Naive thymus-derived CD8-positive, alpha-beta T cell (primary cell): ENCODE measurements at regions of chr14 and their contacts with region 1.

Region 1: DNA sequence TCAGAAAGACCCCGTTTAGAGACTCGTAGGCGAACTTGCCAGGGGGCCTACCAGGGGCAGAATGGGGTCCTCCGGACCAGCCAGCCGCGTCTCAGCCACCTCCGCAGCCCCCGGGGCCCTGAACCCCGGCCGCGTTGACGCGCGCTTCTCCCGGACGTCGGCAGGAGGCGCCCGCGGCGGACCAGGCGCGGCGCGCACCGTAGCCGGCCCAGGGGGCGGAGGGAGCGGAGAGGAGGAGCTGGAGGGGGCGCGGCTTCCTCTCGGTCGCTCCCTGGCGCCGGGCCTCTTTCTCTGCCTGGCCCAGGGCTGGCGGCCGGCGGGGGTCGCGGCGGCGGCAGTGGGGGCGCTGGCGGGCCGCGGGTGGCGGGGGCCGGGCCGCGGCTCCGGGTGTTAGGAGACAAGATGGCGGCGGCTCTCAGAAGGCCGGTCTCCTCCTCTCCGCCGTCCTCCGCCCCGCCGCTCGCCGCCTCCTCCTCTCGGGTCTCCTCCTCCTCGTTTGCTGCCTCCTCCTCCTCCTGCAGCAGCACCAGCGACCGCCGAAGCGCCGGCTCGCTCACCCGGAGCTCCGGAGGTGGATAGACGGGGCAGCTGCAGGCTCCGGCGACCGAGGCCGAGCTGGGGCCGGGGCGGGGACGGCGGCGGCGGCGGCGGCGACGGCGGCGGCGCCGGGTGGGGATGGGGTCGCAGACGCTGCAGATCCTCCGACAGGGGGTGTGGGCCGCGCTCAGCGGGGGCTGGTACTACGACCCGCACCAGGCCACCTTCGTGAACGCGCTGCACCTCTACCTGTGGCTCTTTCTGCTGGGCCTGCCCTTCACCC is at the start of gene PCNX1:
- DNase-seq: peak; percentile 86 to 96 (median 90)
- ATAC-seq: peak; percentile 80
- H3K4me3 Mint-ChIP-seq: peak within 1 kb of the TSS; percentile 79 to 95 (median 92)
- H3K27ac Mint-ChIP-seq: peak within 1 kb of the TSS; percentile 96 to 99 (median 98)
- H3K4me1 Mint-ChIP-seq: peaks cover 18 to 62% (median 54%) of the 10 kb centered on the region in 4 donors
- H3K27me3 Mint-ChIP-seq: no peaks in the 10 kb centered on the region
- polyA plus RNA-seq, gene PCNX1: 5.5 to 8.3 (median 7.9) TPM

Region 2: DNA sequence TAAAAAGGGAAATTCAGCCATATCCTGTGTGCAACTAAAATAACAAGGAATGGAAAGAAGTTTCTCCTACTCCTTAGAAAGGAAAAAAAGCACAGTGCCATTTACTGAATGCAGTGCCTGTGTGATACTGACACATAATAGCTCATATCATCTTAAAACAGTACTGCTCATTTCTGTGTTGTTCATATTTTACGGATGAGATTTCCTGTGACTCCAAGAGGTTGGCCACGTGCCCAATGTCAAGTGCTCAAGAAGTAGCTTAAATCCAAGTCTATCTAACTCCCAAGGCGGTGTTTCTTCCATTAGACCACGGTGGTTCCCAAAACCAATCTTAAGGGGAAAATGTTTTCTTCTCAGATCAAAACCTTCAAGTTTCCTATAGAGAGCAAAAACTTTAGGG is 118.0 kb before region 1 on chr14:
- POLR2A ChIA-PET with region 1: no interaction called
- DNase-seq: no peak
- ATAC-seq: no peak
- H3K4me3 Mint-ChIP-seq: no peak overlapping the region
- H3K27ac Mint-ChIP-seq: no peak overlapping the region
- H3K4me1 Mint-ChIP-seq: peaks cover 0 to 11% (median 5%) of the 10 kb centered on the region in 4 donors
- H3K27me3 Mint-ChIP-seq: no peaks in the 10 kb centered on the region

Region 3: GRCh38 chr14:70919774-70920173 is 12.4 kb after region 1 on chr14:
- POLR2A ChIA-PET with region 1: interaction called, 29 read pairs
- DNase-seq: no peak
- ATAC-seq: peak; percentile 26 to 46
- H3K4me3 Mint-ChIP-seq: peak overlapping the region in 9 of 10 donors; percentile 45 to 80 (median 59)
- H3K27ac Mint-ChIP-seq: peak overlapping the region; percentile 50 to 90 (median 80)
- H3K4me1 Mint-ChIP-seq: peaks cover 33 to 95% (median 81%) of the 10 kb centered on the region in 4 donors
- H3K27me3 Mint-ChIP-seq: no peaks in the 10 kb centered on the region

Region 4: DNA sequence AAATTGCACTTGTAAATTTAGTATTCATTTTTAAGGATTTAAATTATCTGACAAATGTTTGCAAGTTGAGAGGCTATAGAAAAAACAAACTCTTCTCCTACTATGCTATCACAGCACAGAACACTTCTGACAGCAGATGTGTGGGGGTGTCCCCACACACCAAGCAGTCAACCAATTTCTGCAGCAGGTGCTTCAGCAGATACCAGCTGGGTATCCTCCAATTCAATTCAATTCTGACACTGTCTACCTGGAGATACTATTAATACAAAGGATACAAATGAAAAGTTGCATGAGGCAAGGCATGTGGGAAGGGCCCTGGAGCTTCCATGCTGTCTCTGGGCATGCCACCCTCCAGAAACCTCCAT is 34.9 kb after region 1 on chr14:
- POLR2A ChIA-PET with region 1: interaction called, 21 read pairs
- DNase-seq: no peak
- ATAC-seq: peak in 1 of 2 donors; percentile 17
- H3K4me3 Mint-ChIP-seq: peak overlapping the region in 8 of 10 donors; percentile 22 to 75 (median 62)
- H3K27ac Mint-ChIP-seq: peak overlapping the region; percentile 36 to 98 (median 88)
- H3K4me1 Mint-ChIP-seq: peaks cover 41 to 73% (median 67%) of the 10 kb centered on the region in 4 donors
- H3K27me3 Mint-ChIP-seq: no peaks in the 10 kb centered on the region

Region 5: DNA sequence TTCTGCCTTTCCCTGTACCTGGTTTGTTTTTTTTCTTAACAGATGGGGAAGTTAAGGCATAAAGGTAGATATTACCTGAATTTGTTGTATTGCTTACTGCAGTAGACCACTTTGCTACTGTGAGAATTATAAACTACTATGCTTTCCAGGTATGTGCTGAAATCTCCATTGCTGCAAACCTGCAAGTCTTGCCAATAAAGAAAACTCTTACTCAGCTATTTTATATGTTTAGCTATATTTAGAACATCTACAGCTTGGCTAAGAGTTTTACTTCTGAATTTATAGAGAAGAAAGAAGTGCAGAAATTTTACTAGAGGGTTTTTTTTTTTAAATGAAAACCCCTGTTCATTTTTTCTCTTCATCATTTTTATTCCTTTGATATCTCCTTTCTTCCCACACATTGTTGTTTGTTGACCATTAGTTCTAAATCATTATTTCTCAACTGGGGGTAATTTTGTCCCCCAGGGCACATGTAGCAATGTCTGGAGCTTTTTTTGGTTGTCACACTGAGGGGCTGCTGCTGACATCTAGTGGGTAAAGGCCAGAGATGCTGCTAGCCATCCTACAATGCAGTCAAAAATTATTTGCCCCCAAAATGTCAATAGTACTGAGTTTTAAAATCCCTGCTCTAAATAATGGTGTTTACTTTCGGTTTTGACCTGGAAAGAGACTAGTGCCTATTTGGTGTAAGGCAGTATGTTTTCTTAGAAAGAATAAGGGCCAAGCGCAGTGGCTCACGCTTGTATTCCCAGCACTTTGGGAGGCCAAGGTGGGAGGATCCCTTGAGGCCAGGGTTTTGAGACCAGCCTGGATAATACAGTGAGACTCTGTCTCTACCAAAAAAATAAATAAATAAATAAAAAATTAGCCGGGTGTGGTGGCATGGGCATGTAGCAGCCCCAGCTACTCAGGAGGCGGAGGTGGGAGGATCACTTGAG is 48.4 kb after region 1 on chr14:
- POLR2A ChIA-PET with region 1: interaction called, 71 read pairs
- DNase-seq: peak in 9 of 10 donors; percentile 20 to 73 (median 53)
- ATAC-seq: peak; percentile 85 to 91
- H3K4me3 Mint-ChIP-seq: peak overlapping the region in 2 of 10 donors; percentile 7 to 36
- H3K27ac Mint-ChIP-seq: peak overlapping the region in 7 of 10 donors; percentile 9 to 86 (median 64)
- H3K4me1 Mint-ChIP-seq: peaks cover 14 to 43% (median 37%) of the 10 kb centered on the region in 4 donors
- H3K27me3 Mint-ChIP-seq: no peaks in the 10 kb centered on the region